Posterior vena cava (tissue), 2 donors: ENCODE measurements at regions of chr20 and their contacts with region 1.

Region 1: GRCh38 chr20:40724566-40724965 is 35.5 kb upstream of the MAFB start:
- DNase-seq: no peak

Region 2: DNA sequence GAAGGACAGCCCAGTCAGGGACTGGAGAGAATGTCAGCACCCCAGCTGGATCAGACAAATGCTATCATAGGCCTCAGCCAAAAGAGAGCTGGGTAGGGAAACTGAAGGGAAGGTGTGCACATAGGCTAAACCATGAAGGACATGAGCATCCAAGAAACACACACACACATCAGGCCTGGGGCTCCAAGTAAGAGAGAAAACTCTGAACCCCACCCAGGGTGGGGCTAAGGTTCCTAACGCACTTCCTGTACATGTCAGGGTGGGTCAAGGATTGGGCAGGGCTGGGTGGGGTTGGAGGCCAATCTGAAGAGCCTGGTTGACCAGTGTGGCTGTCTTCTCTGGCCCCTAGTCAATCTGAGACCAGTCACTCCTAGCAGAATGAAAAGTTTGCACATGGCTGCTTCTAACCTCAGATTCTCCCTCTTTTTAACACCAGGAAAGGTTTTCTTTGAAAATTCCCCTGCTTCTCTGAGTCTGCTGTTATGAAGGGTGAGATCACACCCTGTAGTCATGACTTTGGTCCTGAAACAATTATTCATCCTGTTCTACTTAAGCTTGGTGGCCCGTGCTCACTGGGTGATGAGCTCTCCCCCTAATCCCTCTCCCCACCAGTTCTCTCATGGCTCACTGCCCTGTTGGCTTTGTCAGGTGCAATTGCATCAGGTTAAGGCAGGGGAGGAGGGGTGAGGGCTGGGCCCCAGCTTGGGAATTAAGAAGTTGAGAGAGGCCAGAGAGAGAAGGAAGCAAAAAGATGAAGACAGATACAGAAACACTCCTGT is 123.9 kb before region 1 on chr20:
- intact Hi-C with region 1: no loop called
- DNase-seq: no peak

Region 3: GRCh38 chr20:40766790-40767529 is 42.4 kb after region 1 on chr20:
- intact Hi-C with region 1: loop called in 1 of 2 experiments (anchors 1 kb)
- DNase-seq: no peak